Naive thymus-derived CD4-positive, alpha-beta T cell (primary cell): ENCODE measurements at regions of chr5 and their contacts with region 1.

Region 1: DNA sequence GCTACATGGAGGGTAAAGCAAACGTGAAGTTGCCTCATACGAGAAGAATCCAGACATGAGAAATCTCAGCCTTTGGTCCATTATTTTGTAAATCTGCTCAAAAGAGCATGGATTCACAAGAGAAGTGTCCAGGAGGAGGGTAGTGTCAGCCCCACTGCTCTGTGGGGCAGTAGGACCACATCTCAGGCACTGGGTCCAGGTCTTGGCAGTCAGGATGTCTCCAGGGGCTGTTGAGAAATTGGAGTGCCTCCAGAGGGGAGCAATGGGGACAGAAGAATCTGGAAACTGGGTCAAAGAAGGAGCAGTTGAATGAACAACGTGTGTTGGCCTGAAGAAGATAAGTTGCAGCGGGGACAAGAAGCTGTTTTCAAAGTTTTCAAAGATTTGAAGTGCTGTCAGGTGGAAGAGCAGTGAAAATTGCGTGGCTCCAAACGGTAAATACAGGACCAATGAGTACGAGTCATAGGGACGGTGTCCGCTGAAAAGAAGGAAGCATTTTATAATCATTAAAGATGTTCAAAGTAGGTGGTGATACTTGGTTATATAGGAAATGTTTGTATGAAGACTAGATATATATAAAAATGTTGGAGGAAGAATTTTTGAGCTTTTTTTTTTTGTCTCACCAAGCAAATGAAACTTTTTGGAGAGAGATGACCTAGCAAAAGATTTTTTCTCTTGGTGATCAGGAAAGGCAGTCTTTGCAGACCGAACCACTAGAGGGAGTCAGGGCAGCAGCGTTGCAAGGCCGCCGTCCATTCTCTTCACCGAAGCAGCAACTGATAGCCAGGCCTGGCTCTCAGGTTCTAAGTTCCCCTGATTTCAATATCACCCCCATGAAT is 57.1 kb upstream of the ZBED3 start:
- DNase-seq: peak in 8 of 9 donors; percentile 46 to 74 (median 62)
- ATAC-seq: peak; percentile 90
- H3K4me3 ChIP-seq: no peak overlapping the region
- H3K4me3 Mint-ChIP-seq: no peak overlapping the region
- H3K27ac ChIP-seq: no peak overlapping the region
- H3K27ac Mint-ChIP-seq: peak overlapping the region in 3 of 9 donors; percentile 8 to 80 (median 68)
- H3K4me1 ChIP-seq: no peaks in the 10 kb centered on the region
- H3K4me1 Mint-ChIP-seq: peaks cover 0 to 16% (median 11%) of the 10 kb centered on the region in 7 donors
- H3K27me3 ChIP-seq: no peaks in the 10 kb centered on the region
- H3K27me3 Mint-ChIP-seq: peaks cover 0 to 17% (median 9%) of the 10 kb centered on the region in 5 donors

Region 2: GRCh38 chr5:77155179-77155785 is 11.1 kb after region 1 on chr5:
- CTCF ChIA-PET with region 1: interaction called, 31 read pairs
- POLR2A ChIA-PET with region 1: interaction called, 7 read pairs
- intact Hi-C with region 1: loop called in 1 of 2 experiments (anchors 1 kb)
- DNase-seq: peak in 7 of 9 donors; percentile 81 to 94 (median 91)
- ATAC-seq: peak; percentile 96
- H3K4me3 ChIP-seq: no peak overlapping the region
- H3K4me3 Mint-ChIP-seq: peak overlapping the region in 9 of 10 donors; percentile 22 to 83 (median 60)
- H3K27ac ChIP-seq: peak overlapping the region; percentile 67
- H3K27ac Mint-ChIP-seq: peak overlapping the region in 8 of 9 donors; percentile 74 to 99 (median 96)
- H3K4me1 ChIP-seq: peaks cover 0 to 27% of the 10 kb centered on the region in 2 donors
- H3K4me1 Mint-ChIP-seq: peaks cover 17 to 40% (median 33%) of the 10 kb centered on the region in 7 donors
- H3K27me3 ChIP-seq: no peaks in the 10 kb centered on the region
- H3K27me3 Mint-ChIP-seq: peaks cover 0 to 12% (median 3%) of the 10 kb centered on the region in 5 donors

Region 3: DNA sequence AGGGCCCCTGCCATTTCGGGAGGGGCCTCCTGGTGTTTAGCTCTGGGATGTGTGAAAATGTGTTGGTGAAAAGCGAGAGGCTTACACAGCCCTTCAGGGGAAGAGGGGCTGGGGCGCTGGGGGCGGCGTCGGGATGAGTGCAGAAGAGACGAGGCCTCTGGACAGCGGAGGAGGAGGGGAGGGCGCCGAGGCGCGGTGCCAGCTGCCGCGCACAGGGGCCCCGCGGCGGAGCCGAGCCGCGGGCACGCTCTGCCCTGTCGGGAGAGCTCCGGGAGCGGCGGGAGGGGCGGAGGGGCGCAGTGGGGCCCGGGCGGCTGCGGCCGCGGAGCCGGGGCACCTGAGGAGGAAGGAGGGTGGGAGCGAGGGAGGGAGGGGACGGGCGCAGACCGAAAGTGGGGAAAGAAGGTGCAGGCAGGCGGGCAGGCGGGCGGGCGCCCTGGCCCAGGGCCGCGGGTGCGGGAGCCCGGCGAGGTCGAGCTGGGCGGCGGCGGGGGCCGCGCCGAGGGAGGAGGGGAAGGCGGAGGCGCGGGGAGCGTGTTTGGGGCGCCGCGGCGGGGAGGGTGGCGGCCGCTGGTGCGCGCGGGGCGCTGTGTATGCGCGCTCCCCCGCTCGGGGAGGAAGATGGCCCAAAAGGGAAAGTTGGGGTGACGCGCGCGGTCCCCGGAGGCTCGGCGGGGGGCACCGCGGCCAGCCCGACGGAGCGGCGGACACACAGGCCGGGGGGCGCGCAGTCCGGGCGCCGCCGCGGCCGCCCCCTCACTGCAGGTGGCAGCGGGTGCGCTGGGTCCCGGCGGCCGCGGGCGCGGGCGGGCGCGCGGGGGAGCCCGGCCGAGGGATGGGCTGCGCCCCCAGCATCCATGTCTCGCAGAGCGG is 66.1 kb after region 1 on chr5 and contains the start of gene PDE8B:
- CTCF ChIA-PET with region 1: no interaction called
- POLR2A ChIA-PET with region 1: no interaction called
- intact Hi-C with region 1: loop called in 1 of 2 experiments (anchors 2 kb)
- DNase-seq: peak in 6 of 9 donors; percentile 26 to 38 (median 31)
- ATAC-seq: peak; percentile 75
- H3K4me3 ChIP-seq: peak within 1 kb of the TSS; percentile 33
- H3K4me3 Mint-ChIP-seq: peak within 1 kb of the TSS; percentile 84 to 90 (median 86)
- H3K27ac ChIP-seq: no peak within 1 kb of the TSS
- H3K27ac Mint-ChIP-seq: peak within 1 kb of the TSS in 5 of 9 donors; percentile 12 to 84 (median 71)
- H3K4me1 ChIP-seq: peaks cover 0 to 8% of the 10 kb centered on the region in 2 donors
- H3K4me1 Mint-ChIP-seq: peaks cover 7 to 23% (median 14%) of the 10 kb centered on the region in 7 donors
- H3K27me3 ChIP-seq: peaks cover 3 to 16% of the 10 kb centered on the region in 2 donors
- H3K27me3 Mint-ChIP-seq: peaks cover 55 to 69% (median 61%) of the 10 kb centered on the region in 5 donors
- total RNA-seq, gene PDE8B: 1.2 TPM in 1 of 5 experiments, not detected in the others

Region 4: DNA sequence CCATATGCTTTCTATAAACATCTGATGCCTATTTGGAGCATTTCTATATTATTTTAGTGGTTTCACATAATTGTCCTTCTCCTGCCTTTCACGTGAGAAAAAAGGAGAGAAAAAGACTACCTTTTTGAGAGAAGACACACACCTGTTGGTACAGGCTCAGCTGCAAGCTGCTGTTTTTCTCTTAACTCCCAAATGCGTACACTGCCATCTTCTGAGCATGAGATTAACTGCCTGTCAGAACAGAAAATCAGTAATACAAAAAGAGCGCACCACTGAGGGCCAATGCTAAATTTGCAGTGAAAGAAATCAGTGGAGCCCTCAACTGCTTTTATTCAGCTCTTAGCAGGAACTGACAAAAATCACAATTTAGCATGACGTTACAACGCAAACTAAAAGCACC is 293.0 kb after region 1 on chr5:
- CTCF ChIA-PET with region 1: interaction called, 4 read pairs
- POLR2A ChIA-PET with region 1: no interaction called
- intact Hi-C with region 1: loop called (anchors 1 kb)
- DNase-seq: peak in 4 of 9 donors; percentile 9 to 24 (median 16)
- ATAC-seq: no peak
- H3K4me3 ChIP-seq: no peak overlapping the region
- H3K4me3 Mint-ChIP-seq: no peak overlapping the region
- H3K27ac ChIP-seq: no peak overlapping the region
- H3K27ac Mint-ChIP-seq: no peak overlapping the region
- H3K4me1 ChIP-seq: no peaks in the 10 kb centered on the region
- H3K4me1 Mint-ChIP-seq: no peaks in the 10 kb centered on the region
- H3K27me3 ChIP-seq: no peaks in the 10 kb centered on the region
- H3K27me3 Mint-ChIP-seq: no peaks in the 10 kb centered on the region

Region 5: DNA sequence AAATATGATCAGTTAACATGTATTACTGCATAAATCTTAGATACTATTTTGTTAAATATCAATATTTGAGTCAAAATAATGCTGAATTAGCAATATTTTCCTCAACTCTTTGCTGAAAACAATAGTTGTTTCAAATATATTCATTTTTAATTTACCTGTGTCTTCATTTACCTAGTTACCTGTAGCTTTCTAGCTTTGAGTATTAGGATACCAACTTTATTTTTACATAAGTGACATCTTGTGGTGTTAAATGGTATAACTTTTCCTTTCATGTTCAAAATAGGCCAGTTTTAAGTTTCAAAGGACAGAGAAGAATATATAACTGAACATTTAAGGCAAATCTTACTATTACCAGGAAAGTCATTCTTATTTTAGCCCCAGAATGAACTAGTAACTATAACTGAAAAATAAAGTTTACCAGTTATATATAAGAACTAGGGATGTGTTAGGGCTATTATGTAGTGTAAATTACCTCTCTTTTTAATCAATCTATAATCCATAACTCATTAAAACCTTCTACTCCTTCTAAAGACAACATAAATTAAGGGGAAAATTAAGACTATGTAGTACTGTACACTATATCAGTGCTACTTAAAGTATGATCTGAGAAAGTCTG is 1125.0 kb after region 1 on chr5:
- CTCF ChIA-PET with region 1: no interaction called
- POLR2A ChIA-PET with region 1: no interaction called
- intact Hi-C with region 1: loop called in 1 of 2 experiments (anchors 2 kb)
- DNase-seq: peak in 4 of 9 donors; percentile 15 to 26 (median 19)
- ATAC-seq: peak; percentile 76
- H3K4me3 ChIP-seq: no peak overlapping the region
- H3K4me3 Mint-ChIP-seq: no peak overlapping the region
- H3K27ac ChIP-seq: no peak overlapping the region
- H3K27ac Mint-ChIP-seq: no peak overlapping the region
- H3K4me1 ChIP-seq: no peaks in the 10 kb centered on the region
- H3K4me1 Mint-ChIP-seq: peaks cover 9 to 36% (median 31%) of the 10 kb centered on the region in 7 donors
- H3K27me3 ChIP-seq: no peaks in the 10 kb centered on the region
- H3K27me3 Mint-ChIP-seq: no peaks in the 10 kb centered on the region